ENCODE measurements at regions of chr2 and their contacts with region 1.

Region 1: DNA sequence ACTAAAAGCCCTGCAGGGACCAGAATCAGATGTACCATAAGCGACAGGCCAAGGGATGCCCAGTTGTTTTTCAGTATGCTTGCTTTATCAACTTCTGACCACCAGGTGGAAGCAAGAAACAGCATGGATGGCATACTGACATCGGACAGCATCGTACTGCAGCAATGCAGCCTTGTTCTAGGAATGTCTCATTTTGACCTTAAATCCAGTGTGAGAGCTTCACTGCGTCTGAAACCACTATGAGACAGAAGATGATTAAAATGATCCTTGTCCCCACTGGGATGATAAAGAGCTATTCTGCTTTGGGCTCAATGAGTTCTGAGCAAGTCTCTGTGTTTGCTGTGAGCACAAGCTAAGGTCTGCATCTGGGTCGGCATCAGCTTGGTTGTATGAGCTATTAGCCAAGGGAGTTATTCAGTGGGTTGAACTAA is 54.3 kb downstream of the CDK15 start:
- DNase-seq: peak; percentile 63
- H3K4me3 Mint-ChIP-seq: no peak overlapping the region
- H3K27ac Mint-ChIP-seq: no peak overlapping the region
- H3K4me1 Mint-ChIP-seq: peaks cover 17% of the 10 kb centered on the region
- H3K27me3 Mint-ChIP-seq: peaks cover 10% of the 10 kb centered on the region

Region 2: DNA sequence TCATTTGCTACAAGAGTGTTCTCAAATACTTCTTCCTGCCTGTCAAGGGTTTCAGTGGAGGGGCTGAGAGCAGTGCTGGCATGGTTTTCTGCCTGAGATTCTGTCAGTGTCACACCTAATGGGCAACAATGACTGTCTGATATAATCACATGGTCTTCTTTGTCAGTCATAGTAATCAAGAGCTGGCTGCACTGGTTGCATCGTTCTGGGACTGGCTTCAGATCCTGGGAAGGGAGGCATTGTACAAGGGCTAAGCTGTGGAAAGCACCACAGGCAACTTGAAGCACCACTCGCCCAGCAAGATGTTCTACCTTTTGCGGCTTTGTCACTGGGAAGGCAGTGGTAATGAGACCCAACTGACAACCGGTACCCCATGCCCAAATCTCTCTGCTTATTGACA is 99.5 kb before region 1 on chr2:
- CTCF ChIA-PET with region 1: no interaction called
- intact Hi-C with region 1: no loop called
- DNase-seq: no peak
- H3K4me3 Mint-ChIP-seq: no peak overlapping the region
- H3K27ac Mint-ChIP-seq: no peak overlapping the region
- H3K4me1 Mint-ChIP-seq: no peaks in the 10 kb centered on the region
- H3K27me3 Mint-ChIP-seq: no peaks in the 10 kb centered on the region

Region 3: GRCh38 chr2:201795607-201796477 is 64.8 kb before region 1 on chr2:
- CTCF ChIA-PET with region 1: interaction called, 5 read pairs
- intact Hi-C with region 1: loop called (anchors 5 kb)
- DNase-seq: peak; percentile 15
- H3K4me3 Mint-ChIP-seq: no peak overlapping the region
- H3K27ac Mint-ChIP-seq: no peak overlapping the region
- H3K4me1 Mint-ChIP-seq: no peaks in the 10 kb centered on the region
- H3K27me3 Mint-ChIP-seq: peaks cover 2% of the 10 kb centered on the region

Measured in activated naive CD4-positive, alpha-beta T cell treated with anti-CD3 and anti-CD28 coated beads for 36 hours (primary cell).